ENCODE measurements at regions of chr13 and their contacts with region 1.

Region 1: DNA sequence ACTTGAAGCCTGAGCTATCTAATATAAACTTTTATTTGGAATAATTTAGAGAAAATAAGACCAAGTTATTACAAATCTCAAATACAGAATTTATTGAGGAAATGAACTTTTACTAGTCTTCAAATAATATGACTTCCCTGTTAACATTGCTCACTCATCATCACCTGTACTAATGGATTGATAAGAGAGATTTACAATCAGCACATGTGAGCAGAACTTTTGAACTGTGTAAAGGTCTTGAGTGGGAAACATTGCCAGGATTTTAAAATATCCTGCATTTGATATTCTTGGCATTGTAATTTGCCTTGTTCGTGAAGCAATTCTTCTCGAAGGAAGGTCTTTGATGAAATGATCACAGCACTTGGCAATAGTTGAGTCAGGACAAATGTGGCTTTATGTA is 111.9 kb downstream of the FGF9 start:
- DNase-seq: no peak
- ATAC-seq: no peak
- H3K4me3 ChIP-seq: no peak overlapping the region
- H3K4me3 Mint-ChIP-seq: no peak overlapping the region
- H3K27ac ChIP-seq: no peak overlapping the region
- H3K27ac Mint-ChIP-seq: no peak overlapping the region
- H3K4me1 ChIP-seq: no peaks in the 10 kb centered on the region
- H3K4me1 Mint-ChIP-seq: no peaks in the 10 kb centered on the region
- H3K27me3 ChIP-seq: no peaks in the 10 kb centered on the region
- H3K27me3 Mint-ChIP-seq: peaks cover 5% of the 10 kb centered on the region
- CTCF ChIP-seq: no peak

Region 2: DNA sequence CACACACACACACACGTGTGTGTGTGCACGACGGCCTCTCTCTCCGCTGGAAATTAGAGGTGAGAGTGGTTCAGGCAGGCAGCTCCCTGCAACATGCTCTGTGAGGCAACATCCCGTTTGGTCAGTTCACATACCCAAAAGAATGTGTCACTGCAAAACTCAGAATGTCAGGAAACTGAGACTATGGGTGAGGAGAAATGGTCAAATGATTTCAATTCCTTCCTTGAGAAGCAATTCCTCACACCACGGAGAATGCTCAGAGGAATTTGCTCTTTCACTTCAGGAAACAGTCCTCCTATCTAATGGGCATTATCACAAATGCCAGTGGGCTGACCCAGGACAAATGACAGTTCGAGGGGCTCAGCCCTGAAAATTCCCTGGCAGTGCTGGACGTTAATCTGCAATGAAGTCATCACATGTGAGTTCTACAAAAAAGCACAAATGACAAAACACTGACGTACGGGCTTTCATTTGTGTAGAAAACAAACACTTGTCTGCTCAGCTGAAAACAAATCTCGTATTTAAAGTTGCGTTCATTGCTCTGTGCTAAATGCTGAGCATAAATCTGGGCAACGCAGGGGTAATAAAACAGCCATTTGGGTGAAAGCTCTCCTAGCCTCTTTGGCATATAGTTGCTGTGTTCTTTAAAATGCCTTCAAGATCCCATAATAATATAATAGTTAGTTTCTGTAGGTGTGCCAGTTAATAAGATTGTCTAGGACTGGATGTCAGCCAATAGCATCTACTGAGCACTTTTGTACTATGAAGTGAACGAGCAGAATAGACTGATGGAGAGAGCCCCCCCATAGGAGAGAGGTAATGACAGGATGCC is 702.8 kb before region 1 on chr13:
- CTCF ChIA-PET with region 1: no interaction called
- POLR2A ChIA-PET with region 1: no interaction called
- intact Hi-C with region 1: no loop called
- DNase-seq: no peak
- ATAC-seq: no peak
- H3K4me3 ChIP-seq: no peak overlapping the region
- H3K4me3 Mint-ChIP-seq: no peak overlapping the region
- H3K27ac ChIP-seq: no peak overlapping the region
- H3K27ac Mint-ChIP-seq: no peak overlapping the region
- H3K4me1 ChIP-seq: peaks cover 4% of the 10 kb centered on the region
- H3K4me1 Mint-ChIP-seq: peaks cover 4% of the 10 kb centered on the region
- H3K27me3 ChIP-seq: no peaks in the 10 kb centered on the region
- H3K27me3 Mint-ChIP-seq: peaks cover 4% of the 10 kb centered on the region
- CTCF ChIP-seq: no peak

Region 3: DNA sequence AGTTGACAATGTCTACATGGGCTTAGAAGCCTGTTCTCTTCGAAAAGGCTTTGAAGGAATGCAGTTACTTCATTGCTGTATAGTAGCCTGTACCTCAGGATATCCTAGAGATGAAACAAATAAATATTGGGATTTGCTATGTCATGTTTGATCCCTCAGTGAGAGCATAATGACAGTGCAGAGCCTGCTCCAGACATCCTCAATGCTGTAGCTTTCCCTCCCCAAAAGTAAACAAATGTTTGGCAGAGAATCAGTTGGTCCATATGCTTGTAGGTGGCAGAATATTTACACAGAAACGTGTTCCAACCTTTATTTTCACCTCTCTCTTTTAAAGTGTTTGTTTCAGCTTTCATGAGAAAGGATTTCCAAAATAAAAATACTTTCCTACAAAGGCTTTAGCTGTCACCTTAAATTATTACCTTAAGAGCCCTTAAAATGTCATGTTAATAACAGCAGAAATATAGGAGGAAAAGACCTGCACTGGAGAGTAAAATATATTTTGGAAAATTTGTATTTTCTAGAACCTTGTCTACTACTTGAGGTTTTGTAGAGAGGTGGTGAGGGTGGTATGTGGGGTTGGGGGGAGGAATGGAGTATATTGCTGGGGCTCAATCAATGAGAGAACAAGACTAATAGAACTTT is 882.9 kb after region 1 on chr13:
- CTCF ChIA-PET with region 1: no interaction called
- POLR2A ChIA-PET with region 1: no interaction called
- intact Hi-C with region 1: no loop called
- DNase-seq: no peak
- ATAC-seq: no peak
- H3K4me3 ChIP-seq: no peak overlapping the region
- H3K4me3 Mint-ChIP-seq: no peak overlapping the region
- H3K27ac ChIP-seq: no peak overlapping the region
- H3K27ac Mint-ChIP-seq: no peak overlapping the region
- H3K4me1 ChIP-seq: no peaks in the 10 kb centered on the region
- H3K4me1 Mint-ChIP-seq: no peaks in the 10 kb centered on the region
- H3K27me3 ChIP-seq: no peaks in the 10 kb centered on the region
- H3K27me3 Mint-ChIP-seq: no peaks in the 10 kb centered on the region
- CTCF ChIP-seq: no peak

Region 4: DNA sequence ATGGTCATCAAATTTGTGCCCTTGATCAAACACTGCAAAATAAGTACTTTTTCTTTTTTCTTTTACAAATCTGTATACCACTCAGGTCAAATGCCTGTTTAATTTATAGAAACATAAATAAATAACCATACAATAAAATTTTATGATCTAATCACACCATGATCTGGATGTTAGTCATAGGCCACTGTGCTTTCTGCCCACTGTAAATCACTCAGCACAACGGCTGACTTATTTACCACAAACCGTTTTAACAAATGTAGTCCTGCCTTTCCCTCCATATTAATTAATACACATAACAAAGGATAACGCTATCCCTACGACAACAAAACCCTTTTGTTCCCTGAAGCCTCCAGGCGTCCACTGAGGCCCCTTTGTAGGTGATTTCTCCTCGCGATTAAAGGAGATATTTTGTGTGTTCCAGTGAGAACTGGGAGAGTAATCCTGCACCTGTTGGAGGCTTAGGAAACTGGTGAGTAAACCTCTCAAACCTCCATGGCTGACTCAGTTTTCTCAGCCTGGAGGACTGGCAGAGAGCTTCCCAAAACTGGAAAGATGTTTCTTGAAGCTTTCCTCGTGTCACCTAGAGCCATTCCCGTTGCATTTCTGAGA is 921.0 kb after region 1 on chr13:
- CTCF ChIA-PET with region 1: no interaction called
- POLR2A ChIA-PET with region 1: no interaction called
- intact Hi-C with region 1: loop called in 1 of 2 experiments (anchors 5 kb)
- DNase-seq: no peak
- ATAC-seq: no peak
- H3K4me3 ChIP-seq: no peak overlapping the region
- H3K4me3 Mint-ChIP-seq: no peak overlapping the region
- H3K27ac ChIP-seq: no peak overlapping the region
- H3K27ac Mint-ChIP-seq: no peak overlapping the region
- H3K4me1 ChIP-seq: no peaks in the 10 kb centered on the region
- H3K4me1 Mint-ChIP-seq: no peaks in the 10 kb centered on the region
- H3K27me3 ChIP-seq: no peaks in the 10 kb centered on the region
- H3K27me3 Mint-ChIP-seq: no peaks in the 10 kb centered on the region
- CTCF ChIP-seq: no peak